ENCODE measurements at regions of chr22 and their contacts with region 1.

Region 1: GRCh38 chr22:42769574-42770447 is 49.1 kb upstream of the A4GALT start:
- DNase-seq: no peak
- H3K4me3 ChIP-seq: no peak overlapping the region; the same call in 1 of the 2 replicates
- H3K27me3 ChIP-seq: no peaks in the 10 kb centered on the region; the same call in 1 of the 2 replicates
- CTCF ChIP-seq: no peak

Region 2: DNA sequence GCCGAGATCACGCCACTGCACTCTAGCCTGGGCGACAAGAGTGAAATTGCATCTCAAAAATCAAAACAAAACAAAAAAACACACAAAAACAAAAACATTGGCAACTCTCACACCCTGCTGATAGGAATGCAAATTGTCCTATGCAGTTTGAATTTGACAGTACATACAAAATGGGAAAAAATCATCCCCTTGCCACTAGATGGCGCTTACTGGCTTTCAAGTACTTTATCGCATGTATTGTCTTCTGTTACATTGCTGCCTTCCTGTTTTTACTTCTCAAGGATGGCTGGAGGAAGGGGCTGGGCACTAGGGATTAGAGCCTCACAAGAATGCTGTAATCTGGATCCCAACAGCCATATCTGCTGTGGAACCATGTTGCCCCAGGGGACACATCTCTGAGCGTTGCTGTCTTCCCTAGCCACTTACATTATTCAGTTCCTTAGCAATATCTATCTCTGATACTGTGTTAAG is 10.3 kb after region 1 on chr22:
- CTCF ChIA-PET with region 1: interaction called, 11 read pairs
- POLR2A ChIA-PET with region 1: no interaction called
- DNase-seq: peak; percentile 65
- H3K4me3 ChIP-seq: no peak overlapping the region
- H3K27me3 ChIP-seq: no peaks in the 10 kb centered on the region
- CTCF ChIP-seq: peak; percentile 86

Region 3: GRCh38 chr22:42791721-42792420 is 22.1 kb after region 1 on chr22:
- CTCF ChIA-PET with region 1: no interaction called
- POLR2A ChIA-PET with region 1: interaction called, 15 read pairs
- DNase-seq: no peak
- H3K4me3 ChIP-seq: no peak overlapping the region
- H3K27me3 ChIP-seq: no peaks in the 10 kb centered on the region
- CTCF ChIP-seq: no peak